ENCODE measurements at regions of chr10 and their contacts with region 1.

Region 1: GRCh38 chr10:2927958-2928840 is 139.1 kb upstream of the PFKP start:
- DNase-seq: peak; percentile 71 to 92
- ATAC-seq: peak; percentile 91 to 95
- H3K4me3 ChIP-seq: no peak overlapping the region
- H3K27ac ChIP-seq: no peak overlapping the region
- H3K4me1 ChIP-seq: peaks cover under 1% of the 10 kb centered on the region; the same call in 2 of the 3 replicates
- CTCF ChIP-seq: peak; percentile 86
- EP300 ChIP-seq: no peak
- POLR2A ChIP-seq: no peak
- RAD21 ChIP-seq: peak; percentile 90 to 93

Region 2: GRCh38 chr10:2658780-2659179 is 269.4 kb before region 1 on chr10:
- CTCF ChIA-PET with region 1: no interaction called
- POLR2A ChIA-PET with region 1: no interaction called
- DNase-seq: no peak
- ATAC-seq: no peak
- H3K4me3 ChIP-seq: no peak overlapping the region
- H3K27ac ChIP-seq: no peak overlapping the region
- H3K4me1 ChIP-seq: no peaks in the 10 kb centered on the region
- CTCF ChIP-seq: no peak
- EP300 ChIP-seq: no peak
- POLR2A ChIP-seq: no peak
- RAD21 ChIP-seq: no peak

Region 3: DNA sequence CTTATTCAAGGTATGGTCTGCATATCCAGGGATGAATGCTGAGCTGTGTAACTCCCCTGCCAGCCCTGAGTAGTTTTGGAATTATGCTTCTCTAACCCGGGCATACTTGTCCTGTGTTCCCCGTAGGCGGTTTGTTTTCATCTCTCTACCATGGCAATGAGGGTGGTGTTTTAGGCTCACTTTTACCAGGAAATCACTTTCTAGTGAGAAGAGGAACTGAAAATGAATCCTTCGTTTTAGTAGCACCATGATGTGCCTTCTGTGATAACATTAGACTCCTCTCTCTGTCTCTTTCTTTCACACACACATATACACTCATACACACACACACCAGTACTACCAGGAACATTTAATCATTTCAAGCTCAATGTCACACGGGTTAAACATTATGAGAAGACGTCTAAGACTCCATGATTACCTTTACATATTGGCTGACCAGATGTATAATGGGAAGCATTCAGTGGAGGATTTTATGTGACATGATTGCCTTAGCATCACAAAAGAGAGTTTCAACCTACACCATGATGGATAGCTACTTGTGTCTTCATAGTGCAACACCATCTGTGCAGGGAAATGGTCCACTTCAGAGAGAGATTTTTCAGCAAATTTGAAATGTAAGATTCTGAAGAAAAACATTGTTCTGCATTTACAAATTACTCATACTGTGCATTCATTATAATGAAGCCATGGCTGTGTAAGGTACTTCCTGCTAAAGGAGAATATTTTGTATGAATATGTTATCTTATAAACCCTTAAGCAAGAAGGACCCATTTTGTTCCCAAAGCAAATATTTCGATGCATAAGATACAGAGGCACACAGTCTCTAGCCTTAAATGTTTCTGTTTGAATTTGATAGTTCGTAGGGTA is 108.2 kb after region 1 on chr10:
- CTCF ChIA-PET with region 1: interaction called, 12 read pairs
- POLR2A ChIA-PET with region 1: no interaction called
- DNase-seq: no peak
- ATAC-seq: peak in 1 of 2 experiments; percentile 13; a peak in 1 of 6 replicates
- H3K4me3 ChIP-seq: no peak overlapping the region
- H3K27ac ChIP-seq: no peak overlapping the region
- H3K4me1 ChIP-seq: no peaks in the 10 kb centered on the region
- CTCF ChIP-seq: no peak
- EP300 ChIP-seq: no peak
- POLR2A ChIP-seq: no peak
- RAD21 ChIP-seq: no peak

Measured in A549 (cell line).